Activated CD4-positive, alpha-beta T cell treated with anti-CD3 and anti-CD28 coated beads for 36 hours (primary cell): ENCODE measurements at regions of chr7 and their contacts with region 1.

Region 1: GRCh38 chr7:151351027-151351426 is 9.4 kb downstream of the NUB1 start:
- DNase-seq: peak; percentile 79
- ATAC-seq: peak; percentile 34
- H3K4me3 Mint-ChIP-seq: peak overlapping the region; percentile 66
- H3K27ac Mint-ChIP-seq: peak overlapping the region; percentile 95
- H3K4me1 Mint-ChIP-seq: peaks cover 48% of the 10 kb centered on the region
- H3K27me3 Mint-ChIP-seq: no peaks in the 10 kb centered on the region

Region 2: DNA sequence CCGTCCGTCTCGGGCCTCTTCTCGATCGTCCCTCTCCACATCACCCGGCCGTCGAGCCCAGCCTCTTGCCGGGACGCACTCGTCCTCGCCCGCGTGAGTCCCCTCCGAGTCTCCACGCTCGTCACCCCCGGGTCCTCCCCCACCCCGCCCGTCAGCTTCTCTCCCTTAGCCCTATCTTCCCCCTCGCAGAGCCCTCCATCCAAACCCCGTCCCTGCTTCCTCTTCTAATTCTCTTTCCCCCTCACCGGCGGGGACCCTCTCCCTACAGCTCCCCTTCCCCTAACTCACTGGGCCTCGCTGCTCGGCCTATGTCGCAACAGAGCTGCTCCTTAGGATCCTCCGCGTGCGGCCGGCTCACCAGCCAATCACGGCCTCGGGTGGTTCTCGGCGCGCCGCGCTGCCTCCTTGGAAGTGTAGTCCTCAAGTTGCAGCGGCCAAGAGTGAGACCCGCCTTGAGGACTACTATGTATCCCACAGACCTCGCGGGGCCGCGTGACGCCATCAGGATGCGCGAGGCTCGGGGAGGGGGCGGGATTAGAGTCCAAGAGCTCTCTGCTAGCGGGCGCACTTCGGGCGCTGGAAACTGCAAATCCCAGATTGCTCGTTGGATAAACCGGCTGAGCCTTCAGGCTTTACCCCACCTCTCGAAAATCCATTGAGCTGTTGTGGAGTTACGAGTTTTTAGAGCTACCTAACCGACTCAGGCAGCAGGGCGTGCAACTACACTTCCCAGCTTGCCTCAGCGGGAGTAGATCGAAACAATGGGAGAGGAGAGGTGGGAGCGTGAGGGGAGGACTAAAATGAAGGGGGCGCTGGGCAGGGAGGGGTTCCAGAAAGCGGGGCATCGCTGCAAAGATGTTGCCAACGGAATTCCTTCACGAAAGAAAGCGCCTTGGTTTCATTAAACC is 123.9 kb before region 1 on chr7 and contains the start of gene ABCF2:
- CTCF ChIA-PET with region 1: no interaction called
- POLR2A ChIA-PET with region 1: no interaction called
- intact Hi-C with region 1: loop called (anchors 1 to 2 kb)
- DNase-seq: peak; percentile 99
- ATAC-seq: peak; percentile 100
- H3K4me3 Mint-ChIP-seq: peak within 1 kb of the TSS; percentile 92
- H3K27ac Mint-ChIP-seq: peak within 1 kb of the TSS; percentile 92
- H3K4me1 Mint-ChIP-seq: peaks cover 40% of the 10 kb centered on the region
- H3K27me3 Mint-ChIP-seq: no peaks in the 10 kb centered on the region
- total RNA-seq, gene ABCF2: 48.4 to 49.0 TPM

Region 3: DNA sequence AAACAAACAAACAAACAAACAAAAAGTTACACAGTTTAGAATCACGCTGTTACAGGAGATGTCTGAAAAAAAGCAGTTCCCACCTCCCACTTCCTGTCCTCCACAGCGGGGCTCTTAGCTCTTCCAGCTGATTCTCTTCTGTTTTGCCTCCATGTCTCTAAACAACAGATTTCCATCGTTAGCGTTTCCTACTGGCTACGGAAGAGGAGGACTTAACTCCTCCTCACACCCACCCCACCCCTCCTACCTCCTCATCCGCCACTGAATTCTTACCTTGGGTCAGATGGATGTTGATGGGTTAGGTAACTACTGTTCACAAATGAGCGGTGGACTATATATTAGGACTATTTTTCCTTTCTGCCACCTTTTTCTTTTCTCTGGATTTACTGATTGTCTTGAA is 46.2 kb before region 1 on chr7:
- CTCF ChIA-PET with region 1: interaction called, 12 read pairs
- POLR2A ChIA-PET with region 1: no interaction called
- intact Hi-C with region 1: no loop called
- DNase-seq: no peak
- ATAC-seq: no peak
- H3K4me3 Mint-ChIP-seq: no peak overlapping the region
- H3K27ac Mint-ChIP-seq: peak overlapping the region; percentile 3
- H3K4me1 Mint-ChIP-seq: peaks cover 8% of the 10 kb centered on the region
- H3K27me3 Mint-ChIP-seq: peaks cover 23% of the 10 kb centered on the region

Region 4: DNA sequence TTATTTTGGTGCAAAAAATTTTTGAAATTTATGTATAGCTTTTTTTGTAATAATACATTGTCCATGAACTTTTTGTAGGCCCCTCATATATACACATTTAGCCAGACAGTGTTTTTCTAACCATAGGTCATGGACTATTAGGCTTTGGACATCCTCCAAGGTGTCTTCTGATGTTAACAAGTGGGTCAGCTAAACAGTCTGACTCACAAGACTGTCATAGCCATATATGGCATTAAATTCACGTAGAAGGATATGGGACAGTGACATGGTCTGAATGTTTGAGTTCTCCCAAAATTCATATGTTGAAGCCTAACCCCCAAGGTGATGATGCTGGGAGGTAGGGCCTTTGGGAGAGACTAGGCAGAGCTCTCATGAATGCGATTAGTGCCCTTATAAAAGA is 23.4 kb before region 1 on chr7:
- CTCF ChIA-PET with region 1: interaction called, 152 read pairs
- POLR2A ChIA-PET with region 1: no interaction called
- intact Hi-C with region 1: no loop called
- DNase-seq: no peak
- ATAC-seq: no peak
- H3K4me3 Mint-ChIP-seq: no peak overlapping the region
- H3K27ac Mint-ChIP-seq: no peak overlapping the region
- H3K4me1 Mint-ChIP-seq: no peaks in the 10 kb centered on the region
- H3K27me3 Mint-ChIP-seq: no peaks in the 10 kb centered on the region

Region 5: DNA sequence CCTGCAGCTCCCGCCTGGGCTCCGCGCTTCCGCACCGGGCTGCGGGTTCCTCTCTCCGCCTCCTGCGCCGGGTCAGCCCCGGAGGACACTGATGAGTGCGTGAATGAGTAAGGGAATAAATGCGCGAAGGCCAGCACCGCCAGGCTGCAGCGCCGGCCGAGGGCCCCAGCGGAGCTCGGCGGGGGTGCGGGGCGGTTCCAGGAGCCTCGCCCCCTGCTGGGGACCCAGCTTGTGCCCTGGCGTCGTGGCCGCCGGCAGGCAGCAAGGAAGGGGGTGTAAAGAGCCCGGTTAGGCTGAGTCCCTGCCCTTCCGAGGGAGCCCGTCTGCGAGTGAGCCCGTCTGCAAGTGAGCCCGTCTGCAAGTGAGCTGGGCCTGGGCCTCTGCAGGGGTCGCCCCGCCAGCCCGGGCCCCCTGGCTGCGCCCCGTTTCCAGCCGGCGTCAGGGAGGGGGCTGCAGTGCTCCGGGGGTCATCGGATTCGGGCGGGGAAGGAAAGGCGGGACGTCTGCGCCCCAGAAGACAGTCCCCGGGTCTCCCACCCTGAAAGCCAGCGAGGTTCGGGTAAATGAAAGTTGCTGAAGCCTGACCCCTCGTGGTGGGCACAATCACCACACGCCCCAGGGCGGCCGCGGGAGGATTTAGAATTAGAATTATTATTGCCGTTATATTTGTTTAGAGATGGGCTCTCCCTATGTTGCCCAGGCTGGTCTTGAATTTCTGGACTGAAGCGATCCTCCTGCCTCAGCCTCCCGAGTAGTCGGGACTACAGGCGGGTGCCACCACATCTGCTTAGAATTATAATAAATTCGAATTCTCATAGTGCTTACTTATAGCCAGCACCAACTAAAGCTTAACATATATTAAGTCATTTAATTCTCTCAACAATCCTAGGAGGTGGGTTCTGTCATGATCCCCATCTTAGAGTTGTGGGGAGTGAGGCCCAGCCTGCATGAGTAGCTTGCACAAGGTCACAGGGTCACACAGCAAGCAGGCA is 97.5 kb after region 1 on chr7:
- CTCF ChIA-PET with region 1: interaction called, 40 read pairs
- POLR2A ChIA-PET with region 1: no interaction called
- intact Hi-C with region 1: loop called in 1 of 2 experiments (anchors 5 kb)
- DNase-seq: peak; percentile 87
- ATAC-seq: peak; percentile 79
- H3K4me3 Mint-ChIP-seq: peak overlapping the region; percentile 59
- H3K27ac Mint-ChIP-seq: no peak overlapping the region
- H3K4me1 Mint-ChIP-seq: peaks cover 12% of the 10 kb centered on the region
- H3K27me3 Mint-ChIP-seq: peaks cover 4% of the 10 kb centered on the region

Region 6: DNA sequence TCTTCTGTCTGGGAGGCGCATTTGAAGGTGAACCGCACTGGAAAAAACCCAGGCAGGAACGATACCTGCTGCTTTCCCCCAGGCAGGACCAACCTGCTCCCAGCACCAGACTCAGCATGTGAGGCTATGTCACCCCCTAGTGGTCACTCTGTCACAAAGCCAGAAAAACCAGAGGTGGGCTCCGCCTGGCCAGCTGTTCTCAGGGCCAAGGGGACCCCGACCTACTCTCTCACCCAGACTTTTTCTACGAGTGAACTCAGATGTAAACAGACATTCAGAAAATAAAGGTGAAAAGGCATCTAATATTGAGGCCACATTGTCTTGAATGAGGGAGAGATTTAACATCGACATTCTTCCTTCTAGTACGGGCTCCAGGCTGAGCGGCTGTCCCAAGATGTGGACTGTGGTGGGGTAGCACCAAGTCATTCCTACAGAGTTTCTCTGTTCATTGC is 408.6 kb after region 1 on chr7:
- CTCF ChIA-PET with region 1: interaction called, 3 read pairs
- POLR2A ChIA-PET with region 1: interaction called, 4 read pairs
- intact Hi-C with region 1: loop called in 1 of 2 experiments (anchors 5 kb)
- DNase-seq: peak; percentile 75
- ATAC-seq: peak; percentile 40
- H3K4me3 Mint-ChIP-seq: no peak overlapping the region
- H3K27ac Mint-ChIP-seq: no peak overlapping the region
- H3K4me1 Mint-ChIP-seq: peaks cover 25% of the 10 kb centered on the region
- H3K27me3 Mint-ChIP-seq: no peaks in the 10 kb centered on the region